Body of pancreas (tissue), 4 donors: ENCODE measurements at regions of chr6 and their contacts with region 1.

Region 1: DNA sequence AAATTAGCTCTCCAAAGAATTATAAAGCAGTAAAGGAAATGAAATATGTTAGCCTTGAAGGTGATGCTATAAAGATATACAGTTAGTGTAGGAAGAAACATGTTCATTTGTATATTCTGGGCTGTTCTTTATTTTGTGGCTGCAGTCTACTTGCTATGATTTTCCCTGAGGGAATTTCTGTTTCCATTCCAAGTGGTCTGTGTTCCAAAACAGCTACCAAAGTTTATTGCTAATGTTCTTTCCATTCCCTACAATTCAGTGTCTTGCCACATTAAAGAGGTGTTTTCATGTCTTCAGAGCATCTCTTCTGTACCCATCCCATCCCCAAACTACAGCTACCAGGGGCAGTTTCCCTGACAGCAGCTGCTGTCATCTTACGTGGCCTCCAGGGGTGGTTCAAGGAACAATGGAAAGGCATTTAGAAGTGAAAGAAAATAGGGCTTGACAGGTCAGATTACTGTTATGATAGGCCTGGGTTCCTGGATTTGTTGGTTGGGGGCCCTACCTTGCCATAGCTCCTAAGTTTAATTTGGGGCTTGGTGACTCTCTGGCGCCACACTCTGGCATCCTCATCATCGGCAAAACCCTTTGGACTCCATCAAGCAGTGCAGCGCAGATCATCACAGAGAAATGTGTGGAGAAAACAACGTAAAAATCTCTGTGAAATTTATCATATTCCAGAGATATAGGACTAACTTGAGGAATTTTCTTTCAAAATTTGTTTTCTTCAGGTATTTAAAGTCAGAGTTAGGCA is 33.8 kb upstream of the AIG1 start:
- DNase-seq: peak; percentile 47 to 66 (median 60)
- ATAC-seq: peak; percentile 68
- H3K4me3 ChIP-seq: no peak overlapping the region
- H3K27ac ChIP-seq: no peak overlapping the region
- H3K4me1 ChIP-seq: no peaks in the 10 kb centered on the region
- H3K27me3 ChIP-seq: no peaks in the 10 kb centered on the region
- CTCF ChIP-seq: peak; percentile 50 to 76 (median 67)
- POLR2A ChIP-seq: no peak

Region 2: GRCh38 chr6:142692942-142693341 is 333.9 kb before region 1 on chr6:
- intact Hi-C with region 1: loop called (anchors 5 kb)
- DNase-seq: peak; percentile 56 to 62 (median 62)
- ATAC-seq: peak; percentile 67
- H3K4me3 ChIP-seq: no peak overlapping the region
- H3K27ac ChIP-seq: no peak overlapping the region
- H3K4me1 ChIP-seq: peaks cover 14% of the 10 kb centered on the region
- H3K27me3 ChIP-seq: no peaks in the 10 kb centered on the region
- CTCF ChIP-seq: peak; percentile 83 to 96 (median 87)
- POLR2A ChIP-seq: no peak

Region 3: DNA sequence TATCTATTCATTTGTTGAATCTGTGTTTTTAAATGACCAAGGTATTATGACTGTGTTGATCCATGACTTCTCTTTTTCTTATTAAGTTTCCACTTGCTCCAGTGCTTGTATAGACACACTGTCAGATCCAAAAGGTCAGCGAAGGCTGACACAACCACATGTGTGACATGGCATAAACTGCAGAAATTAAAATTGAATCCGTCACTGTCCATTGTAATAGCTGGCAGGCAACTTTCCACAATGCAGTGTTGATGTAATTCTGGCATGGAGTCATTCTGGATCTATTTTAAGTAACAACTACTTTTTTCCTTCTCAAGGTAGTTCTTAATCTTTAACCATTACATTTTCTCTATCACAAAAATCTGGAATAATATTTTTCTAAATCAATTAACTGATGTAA is 179.1 kb after region 1 on chr6:
- intact Hi-C with region 1: no loop called
- DNase-seq: no peak
- ATAC-seq: no peak
- H3K4me3 ChIP-seq: no peak overlapping the region
- H3K27ac ChIP-seq: no peak overlapping the region
- H3K4me1 ChIP-seq: no peaks in the 10 kb centered on the region
- H3K27me3 ChIP-seq: no peaks in the 10 kb centered on the region
- CTCF ChIP-seq: no peak
- POLR2A ChIP-seq: no peak

Region 4: DNA sequence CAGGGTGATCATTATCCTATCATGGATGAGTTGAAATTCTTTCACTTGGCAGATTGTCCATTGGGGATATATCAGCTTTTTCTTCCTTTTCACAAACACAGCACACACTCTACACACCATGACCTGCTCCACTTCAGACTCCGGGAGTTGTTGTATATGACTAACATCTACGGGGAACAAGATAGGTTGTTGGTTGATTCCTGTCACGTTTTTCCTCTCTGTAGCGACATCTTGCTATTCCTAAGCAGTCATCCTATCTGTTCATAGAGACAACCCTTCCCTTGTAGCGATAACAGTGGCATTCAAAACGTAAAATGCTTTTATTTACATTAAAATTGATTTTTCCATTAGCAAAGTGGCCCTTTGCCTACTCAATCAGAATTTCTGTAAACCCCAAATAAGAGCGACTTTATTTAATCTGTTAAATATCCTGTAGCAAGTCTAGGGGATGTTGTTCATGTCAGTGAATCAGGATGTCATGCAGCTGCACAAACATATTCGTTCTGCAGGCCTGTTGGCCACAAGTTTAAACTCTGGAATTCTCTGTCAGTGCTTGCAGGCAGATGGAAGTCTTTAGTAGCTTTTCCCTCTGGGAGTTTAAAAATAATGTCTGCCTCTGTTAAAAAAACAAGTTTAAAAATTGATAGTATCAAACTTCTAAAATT is 673.9 kb after region 1 on chr6:
- intact Hi-C with region 1: no loop called
- DNase-seq: no peak
- ATAC-seq: no peak
- H3K4me3 ChIP-seq: no peak overlapping the region
- H3K27ac ChIP-seq: no peak overlapping the region
- H3K4me1 ChIP-seq: peaks cover 15% of the 10 kb centered on the region
- H3K27me3 ChIP-seq: no peaks in the 10 kb centered on the region
- CTCF ChIP-seq: no peak
- POLR2A ChIP-seq: no peak